Mammary epithelial cell (primary cell): ENCODE measurements at regions of chr4 and their contacts with region 1.

Region 1: GRCh38 chr4:108570993-108571569 is 49.3 kb upstream of the RPL34 start:
- DNase-seq: no peak
- H3K4me3 ChIP-seq: no peak overlapping the region
- H3K27ac ChIP-seq: no peak overlapping the region
- H3K4me1 ChIP-seq: no peaks in the 10 kb centered on the region
- H3K27me3 ChIP-seq: peaks cover 5% of the 10 kb centered on the region
- CTCF ChIP-seq: no peak

Region 2: GRCh38 chr4:107736924-107737448 is 834.1 kb before region 1 on chr4:
- CTCF ChIA-PET with region 1: interaction called, 10 read pairs
- dilution Hi-C with region 1: no loop called
- in situ Hi-C with region 1: no loop called
- intact Hi-C with region 1: no loop called
- DNase-seq: no peak
- H3K4me3 ChIP-seq: no peak overlapping the region
- H3K27ac ChIP-seq: no peak overlapping the region
- H3K4me1 ChIP-seq: no peaks in the 10 kb centered on the region
- H3K27me3 ChIP-seq: no peaks in the 10 kb centered on the region
- CTCF ChIP-seq: peak; percentile 79 to 83

Region 3: GRCh38 chr4:107930821-107931774 is 640.0 kb before region 1 on chr4 and contains the start of gene CYP2U1:
- CTCF ChIA-PET with region 1: no interaction called
- dilution Hi-C with region 1: no loop called
- in situ Hi-C with region 1: no loop called
- intact Hi-C with region 1: loop called (anchors 10 kb)
- DNase-seq: peak; percentile 73
- H3K4me3 ChIP-seq: peak within 1 kb of the TSS; percentile 52 to 78 (median 66)
- H3K27ac ChIP-seq: no peak within 1 kb of the TSS
- H3K4me1 ChIP-seq: peaks cover 24% of the 10 kb centered on the region
- H3K27me3 ChIP-seq: no peaks in the 10 kb centered on the region
- CTCF ChIP-seq: peak in 1 of 2 donors; percentile 8
- total RNA-seq, gene CYP2U1: 7.5 to 30.7 TPM

Region 4: DNA sequence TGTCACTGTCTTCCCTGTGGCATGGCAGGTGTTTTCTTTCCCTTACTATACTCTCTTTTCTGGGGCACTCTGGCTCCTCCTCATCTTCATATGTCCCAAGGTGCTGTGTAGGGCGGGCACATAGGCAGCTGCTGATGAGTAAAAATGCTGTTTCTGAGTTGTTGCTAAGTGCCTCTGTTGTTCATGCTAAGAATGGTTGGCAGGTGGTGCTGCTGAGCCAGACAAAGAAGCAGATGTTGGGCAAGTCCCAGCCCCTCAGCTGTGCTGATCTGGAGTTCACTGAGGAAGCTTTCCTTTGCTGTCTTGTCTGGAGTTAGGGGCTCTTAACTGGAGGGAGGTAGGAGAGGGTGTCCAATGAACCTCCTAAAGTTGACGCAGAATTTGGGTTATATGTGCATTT is 540.7 kb before region 1 on chr4:
- CTCF ChIA-PET with region 1: no interaction called
- dilution Hi-C with region 1: no loop called
- in situ Hi-C with region 1: loop called (anchors 10 to 25 kb)
- intact Hi-C with region 1: loop called (anchors 2 kb)
- DNase-seq: peak; percentile 63
- H3K4me3 ChIP-seq: no peak overlapping the region
- H3K27ac ChIP-seq: no peak overlapping the region
- H3K4me1 ChIP-seq: no peaks in the 10 kb centered on the region
- H3K27me3 ChIP-seq: no peaks in the 10 kb centered on the region
- CTCF ChIP-seq: peak; percentile 43 to 63

Region 5: DNA sequence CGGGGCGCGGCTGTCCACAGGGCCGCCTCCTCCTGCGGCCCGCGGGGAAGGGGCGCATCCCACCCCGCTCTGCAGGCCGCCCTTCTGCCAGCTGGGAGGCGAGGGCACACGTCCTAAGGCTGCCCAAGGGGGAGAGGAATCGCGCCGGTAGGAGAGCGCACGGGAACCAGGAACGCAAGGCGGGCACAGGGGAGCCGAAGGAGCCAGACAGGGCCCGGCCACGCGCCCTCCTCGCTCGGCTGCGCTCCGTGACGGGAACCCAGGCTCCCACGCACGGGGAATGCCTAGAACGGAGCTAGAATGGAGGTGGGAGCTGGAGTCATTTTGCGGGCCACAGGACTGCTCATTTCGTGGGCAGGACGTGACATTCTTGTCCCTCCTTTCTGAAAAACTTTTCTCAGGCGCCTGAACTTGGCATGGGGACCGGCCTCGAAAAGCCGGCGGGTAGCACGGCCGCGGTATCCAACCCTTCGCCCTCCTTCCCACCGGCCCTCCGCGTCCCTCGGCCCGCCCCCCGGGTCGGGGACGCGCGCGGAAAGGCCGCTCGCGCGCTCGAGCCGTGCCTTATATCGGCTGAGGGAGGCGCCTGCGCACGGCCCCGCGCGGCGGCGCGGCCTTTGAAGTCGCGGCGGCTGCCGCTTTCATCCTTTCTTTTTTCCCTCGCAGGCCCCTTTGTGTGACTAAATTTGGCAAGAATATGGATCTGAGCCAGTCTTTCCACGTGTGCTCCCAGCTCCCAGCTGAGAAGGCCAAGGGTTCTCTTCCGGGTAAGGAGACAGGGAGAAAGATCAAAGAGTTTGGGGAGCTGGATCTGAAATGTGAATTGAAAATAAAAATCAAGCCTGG is 398.1 kb before region 1 on chr4:
- CTCF ChIA-PET with region 1: no interaction called
- dilution Hi-C with region 1: no loop called
- in situ Hi-C with region 1: no loop called
- intact Hi-C with region 1: loop called (anchors 10 kb)
- DNase-seq: peak; percentile 29
- H3K4me3 ChIP-seq: peak overlapping the region; percentile 32 to 46 (median 40)
- H3K27ac ChIP-seq: no peak overlapping the region
- H3K4me1 ChIP-seq: peaks cover 16% of the 10 kb centered on the region
- H3K27me3 ChIP-seq: peaks cover 50% of the 10 kb centered on the region
- CTCF ChIP-seq: no peak